Motor neuron (in vitro differentiated cells): ENCODE measurements at regions of chr6 and their contacts with region 1.

Region 1: GRCh38 chr6:38871741-38872568 is 156.8 kb downstream of the DNAH8 start:
- ATAC-seq: peak in 4 of 8 experiments; percentile 36 to 72 (median 64)
- H3K4me3 ChIP-seq: no peak overlapping the region
- H3K27ac ChIP-seq: no peak overlapping the region
- H3K4me1 ChIP-seq: no peaks in the 10 kb centered on the region

Region 2: DNA sequence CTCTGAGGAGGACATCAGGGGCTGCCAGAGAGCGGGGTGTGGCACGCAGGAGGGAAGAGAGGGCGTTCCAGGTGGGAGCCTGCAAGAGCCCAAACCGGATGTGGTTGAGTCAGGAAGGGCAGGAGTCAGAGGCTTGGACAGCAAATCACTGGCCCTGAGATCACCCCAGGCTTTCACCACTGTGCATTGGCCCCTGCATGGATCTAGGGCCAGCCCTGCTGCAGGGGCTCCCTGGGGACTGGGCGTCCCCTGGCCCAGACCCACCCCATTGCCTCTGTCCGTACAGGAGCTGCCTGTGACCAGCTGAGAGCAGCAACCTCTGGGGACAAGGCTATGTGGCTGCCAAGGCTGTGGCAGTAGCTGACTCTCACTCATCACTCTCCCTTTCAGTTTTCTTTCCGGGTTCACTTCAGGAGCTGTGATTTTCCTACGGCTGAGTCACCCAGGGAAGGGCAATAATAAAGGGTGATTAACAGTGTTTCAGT is 408.3 kb after region 1 on chr6:
- in situ Hi-C with region 1: loop called in 1 of 9 experiments (anchors 25 kb)
- ATAC-seq: peak; percentile 70 to 98 (median 95)
- H3K4me3 ChIP-seq: no peak overlapping the region
- H3K27ac ChIP-seq: peak overlapping the region; percentile 15 to 55
- H3K4me1 ChIP-seq: peaks cover 8% of the 10 kb centered on the region in 2 donors